ENCODE measurements at regions of chr13 and their contacts with region 1.

Region 1: DNA sequence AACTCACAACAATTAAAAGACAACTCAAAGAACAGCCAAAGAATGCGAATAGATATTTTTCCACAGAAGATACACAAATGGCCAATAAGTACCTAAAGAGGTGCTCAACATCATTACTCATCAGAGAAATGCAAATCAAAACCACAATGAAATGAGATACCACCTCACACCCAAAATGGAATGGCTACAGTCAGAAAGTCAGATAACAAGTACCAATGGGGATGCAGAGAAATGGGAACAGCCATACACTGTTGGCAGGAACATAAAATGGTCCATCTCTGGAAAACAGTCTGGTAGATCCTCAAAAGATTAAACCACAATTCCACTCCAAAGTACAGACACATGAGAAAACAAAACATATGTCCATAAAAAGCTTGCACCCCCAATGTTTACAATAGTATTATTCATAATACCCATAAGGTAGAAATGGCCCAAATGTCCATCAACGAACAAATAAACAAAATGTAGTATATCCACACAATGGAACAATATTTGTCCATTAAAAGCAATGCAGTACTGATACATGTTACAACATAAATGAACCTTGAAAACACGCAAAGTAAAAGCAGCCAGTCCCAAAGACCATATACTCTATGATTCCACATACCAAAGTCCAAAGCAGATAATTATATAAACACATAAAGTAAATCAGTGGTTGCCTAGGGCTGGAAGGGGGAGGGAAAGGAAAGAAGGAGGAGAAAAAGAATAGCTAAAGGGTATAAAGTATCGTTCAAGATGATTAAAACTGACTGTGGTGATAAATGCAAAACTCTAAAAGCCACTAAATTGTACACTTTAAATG is 19.6 kb downstream of the USP12 start:
- DNase-seq: no peak
- H3K4me3 ChIP-seq: no peak overlapping the region
- H3K27ac ChIP-seq: no peak overlapping the region
- H3K4me1 ChIP-seq: peaks cover 1% of the 10 kb centered on the region
- H3K27me3 ChIP-seq: no peaks in the 10 kb centered on the region
- CTCF ChIP-seq: no peak
- EP300 ChIP-seq: no peak
- POLR2A ChIP-seq: no peak

Region 2: GRCh38 chr13:26965952-26966700 is 185.9 kb before region 1 on chr13:
- intact Hi-C with region 1: no loop called
- DNase-seq: peak; percentile 76 to 90 (median 82)
- H3K4me3 ChIP-seq: no peak overlapping the region
- H3K27ac ChIP-seq: no peak overlapping the region
- H3K4me1 ChIP-seq: peaks cover 13% of the 10 kb centered on the region
- H3K27me3 ChIP-seq: no peaks in the 10 kb centered on the region
- CTCF ChIP-seq: no peak
- EP300 ChIP-seq: no peak
- POLR2A ChIP-seq: no peak

Region 3: DNA sequence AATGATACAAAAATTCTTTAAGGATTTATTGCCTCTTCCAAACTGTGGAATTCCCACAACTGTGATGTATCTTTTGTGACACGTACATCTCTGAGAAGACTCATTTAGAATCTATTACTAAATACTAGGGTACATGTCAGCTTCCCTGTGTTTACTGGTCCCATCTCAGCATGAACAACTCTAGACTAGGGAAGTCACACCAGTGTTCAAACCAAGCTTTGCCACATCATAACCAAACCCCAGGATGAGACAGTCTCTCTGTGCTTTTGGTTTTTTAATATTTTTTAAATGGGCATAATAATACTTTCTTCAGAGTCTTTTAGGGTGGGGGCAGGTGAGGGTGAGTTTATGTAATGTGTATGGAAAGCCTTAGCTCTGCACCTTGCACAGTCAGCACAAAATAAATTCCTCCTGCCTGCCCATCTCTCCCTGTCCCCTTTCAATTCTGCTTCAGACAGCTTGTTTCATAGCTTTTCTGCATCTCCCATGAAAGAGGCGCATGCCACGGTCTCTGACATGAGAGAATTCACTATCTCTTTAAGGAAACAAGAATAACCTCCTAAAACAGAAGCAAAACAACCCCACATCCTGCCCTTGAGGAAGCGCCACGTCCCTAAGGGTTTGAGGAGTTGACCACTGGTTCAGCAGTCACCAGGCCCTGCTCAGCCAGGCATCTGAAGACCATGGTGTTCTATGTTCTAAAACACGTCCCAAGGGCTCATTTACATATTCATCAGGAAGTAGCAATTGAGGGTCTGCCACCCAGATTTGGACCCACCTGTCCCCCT is 154.8 kb before region 1 on chr13:
- intact Hi-C with region 1: loop called in 1 of 4 experiments (anchors 10 kb)
- DNase-seq: no peak
- H3K4me3 ChIP-seq: no peak overlapping the region
- H3K27ac ChIP-seq: no peak overlapping the region
- H3K4me1 ChIP-seq: peaks cover 3% of the 10 kb centered on the region
- H3K27me3 ChIP-seq: no peaks in the 10 kb centered on the region
- CTCF ChIP-seq: no peak
- EP300 ChIP-seq: no peak
- POLR2A ChIP-seq: no peak

Region 4: GRCh38 chr13:27226991-27227390 is 75.0 kb after region 1 on chr13:
- intact Hi-C with region 1: no loop called
- DNase-seq: no peak
- H3K4me3 ChIP-seq: no peak overlapping the region
- H3K27ac ChIP-seq: no peak overlapping the region
- H3K4me1 ChIP-seq: no peaks in the 10 kb centered on the region
- H3K27me3 ChIP-seq: no peaks in the 10 kb centered on the region
- CTCF ChIP-seq: no peak
- EP300 ChIP-seq: no peak
- POLR2A ChIP-seq: no peak

Region 5: GRCh38 chr13:28297341-28297740 is 1145.3 kb after region 1 on chr13:
- intact Hi-C with region 1: no loop called
- DNase-seq: no peak
- H3K4me3 ChIP-seq: no peak overlapping the region
- H3K27ac ChIP-seq: no peak overlapping the region
- H3K4me1 ChIP-seq: no peaks in the 10 kb centered on the region
- H3K27me3 ChIP-seq: no peaks in the 10 kb centered on the region
- CTCF ChIP-seq: no peak
- EP300 ChIP-seq: no peak
- POLR2A ChIP-seq: no peak